Panc1 (cell line): ENCODE measurements at regions of chr6 and their contacts with region 1.

Region 1: DNA sequence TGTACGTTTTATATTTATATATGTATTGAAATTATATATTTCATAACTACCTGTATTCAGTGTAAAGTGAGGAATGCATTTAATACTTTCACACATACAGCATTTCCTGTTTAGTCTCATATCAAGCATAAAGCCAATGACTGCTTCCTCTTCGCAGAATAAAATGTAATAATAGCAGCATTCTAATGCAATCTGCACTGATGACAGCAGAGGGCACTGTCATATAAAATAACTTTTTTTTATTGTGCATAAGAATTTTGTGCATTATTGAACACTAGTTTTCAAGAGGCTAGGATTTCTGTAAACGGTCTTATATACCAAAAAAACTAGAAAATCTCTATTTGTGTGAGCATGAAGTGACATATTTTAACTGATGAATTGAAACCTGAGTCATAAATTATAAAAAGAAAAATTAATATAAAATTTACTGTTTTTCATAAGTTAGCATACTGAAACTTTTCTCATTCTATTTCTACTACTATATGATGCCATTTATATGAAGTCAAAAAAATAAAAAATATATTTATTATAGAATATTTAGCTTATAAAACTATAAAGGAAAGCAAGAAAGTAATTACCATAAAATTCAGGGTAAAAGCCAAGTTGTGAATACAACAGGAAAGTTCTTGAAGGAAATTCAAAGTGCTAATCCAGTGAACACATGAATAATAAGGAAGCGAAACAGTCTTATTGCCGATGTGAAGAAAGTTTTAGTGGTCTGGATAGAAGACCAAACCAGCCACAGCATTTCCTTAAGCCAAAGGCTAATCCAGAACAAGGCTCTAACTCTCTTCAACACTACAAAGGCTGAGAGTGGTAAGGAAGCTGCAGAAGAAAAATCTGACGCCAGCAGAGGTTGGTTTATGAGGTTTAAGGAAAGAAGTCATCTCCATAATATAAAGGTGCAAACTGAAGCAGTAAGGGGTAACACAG is 36.3 kb downstream of the RNF146 start:
- DNase-seq: peak; percentile 33
- ATAC-seq: no peak
- H3K4me3 ChIP-seq: no peak overlapping the region
- H3K27ac ChIP-seq: no peak overlapping the region
- H3K4me1 ChIP-seq: no peaks in the 10 kb centered on the region; the same call in 1 of the 2 replicates
- H3K27me3 ChIP-seq: no peaks in the 10 kb centered on the region
- CTCF ChIP-seq: peak; percentile 76; the same call in 1 of the 2 replicates

Region 2: GRCh38 chr6:127420556-127420955 is 117.6 kb after region 1 on chr6:
- CTCF ChIA-PET with region 1: interaction called, 4 read pairs
- POLR2A ChIA-PET with region 1: no interaction called
- in situ Hi-C with region 1: no loop called
- intact Hi-C with region 1: loop called (anchors 2 kb)
- DNase-seq: peak; percentile 96
- ATAC-seq: peak; percentile 99
- H3K4me3 ChIP-seq: 0 out of 4 replicates have a peak overlapping the region, but pooled peaks of 1 of the 2 experiments have one; percentile 0
- H3K27ac ChIP-seq: peak overlapping the region; percentile 89
- H3K4me1 ChIP-seq: peaks cover 13% of the 10 kb centered on the region
- H3K27me3 ChIP-seq: no peaks in the 10 kb centered on the region
- CTCF ChIP-seq: peak; percentile 72

Region 3: GRCh38 chr6:127436578-127437110 is 133.7 kb after region 1 on chr6:
- CTCF ChIA-PET with region 1: no interaction called
- POLR2A ChIA-PET with region 1: no interaction called
- in situ Hi-C with region 1: no loop called
- intact Hi-C with region 1: no loop called
- DNase-seq: no peak
- ATAC-seq: no peak
- H3K4me3 ChIP-seq: no peak overlapping the region
- H3K27ac ChIP-seq: no peak overlapping the region
- H3K4me1 ChIP-seq: no peaks in the 10 kb centered on the region
- H3K27me3 ChIP-seq: no peaks in the 10 kb centered on the region
- CTCF ChIP-seq: no peak

Region 4: DNA sequence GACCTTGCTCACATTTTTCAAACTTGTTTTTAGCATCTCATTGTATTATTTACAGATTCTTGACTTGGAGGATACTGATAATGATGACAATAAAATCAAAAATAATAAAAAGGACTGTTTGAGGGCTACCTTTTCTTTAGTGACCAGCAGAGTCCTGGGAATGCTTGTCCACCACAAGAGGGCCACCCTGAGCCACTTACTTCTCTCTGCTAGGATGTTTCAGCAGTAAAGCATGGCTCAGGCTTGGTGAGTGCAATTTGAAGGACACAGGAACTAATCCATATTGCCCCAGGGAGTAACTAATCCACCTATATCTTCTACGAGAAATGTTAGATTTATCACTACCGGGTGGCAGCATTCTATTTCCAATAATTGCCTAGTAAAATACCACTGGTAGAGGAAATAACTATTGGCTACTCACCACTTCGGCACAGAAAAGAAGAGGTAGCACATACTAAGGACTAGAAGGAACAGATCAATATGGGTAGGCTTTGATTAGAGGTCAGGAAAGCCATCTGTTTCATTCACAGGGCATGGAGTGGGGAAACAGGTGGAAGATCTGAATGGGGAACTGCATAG is 162.0 kb after region 1 on chr6:
- CTCF ChIA-PET with region 1: no interaction called
- POLR2A ChIA-PET with region 1: no interaction called
- in situ Hi-C with region 1: no loop called
- intact Hi-C with region 1: loop called (anchors 2 kb)
- DNase-seq: peak; percentile 52
- ATAC-seq: peak; percentile 96
- H3K4me3 ChIP-seq: no peak overlapping the region
- H3K27ac ChIP-seq: no peak overlapping the region
- H3K4me1 ChIP-seq: no peaks in the 10 kb centered on the region
- H3K27me3 ChIP-seq: no peaks in the 10 kb centered on the region
- CTCF ChIP-seq: peak; percentile 92

Region 5: GRCh38 chr6:127484212-127484858 is 181.3 kb after region 1 on chr6:
- CTCF ChIA-PET with region 1: no interaction called
- POLR2A ChIA-PET with region 1: no interaction called
- in situ Hi-C with region 1: no loop called
- intact Hi-C with region 1: no loop called
- DNase-seq: peak; percentile 24
- ATAC-seq: no peak
- H3K4me3 ChIP-seq: no peak overlapping the region
- H3K27ac ChIP-seq: no peak overlapping the region
- H3K4me1 ChIP-seq: peaks cover 10% of the 10 kb centered on the region; the same call in 1 of the 2 replicates
- H3K27me3 ChIP-seq: no peaks in the 10 kb centered on the region
- CTCF ChIP-seq: no peak

Region 6: DNA sequence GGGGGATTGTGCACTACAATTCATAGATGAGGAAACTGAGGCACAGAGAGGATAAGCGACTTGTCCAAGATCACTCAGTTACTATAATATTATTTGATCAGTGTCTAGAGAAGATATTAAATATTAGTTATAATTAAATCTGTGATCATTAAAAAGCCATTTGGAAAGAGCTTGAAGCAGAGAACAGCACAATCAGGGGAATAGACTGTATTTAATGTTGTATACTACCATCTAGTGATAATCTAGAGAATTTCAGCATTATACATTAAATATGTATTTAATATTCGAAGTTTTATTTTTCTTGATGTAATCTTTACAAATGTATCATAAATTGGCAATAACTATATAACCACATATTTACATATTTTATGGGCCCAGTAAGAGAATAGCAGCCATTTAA is 236.3 kb after region 1 on chr6:
- CTCF ChIA-PET with region 1: interaction called, 14 read pairs
- POLR2A ChIA-PET with region 1: no interaction called
- in situ Hi-C with region 1: no loop called
- intact Hi-C with region 1: loop called (anchors 2 kb)
- DNase-seq: no peak
- ATAC-seq: 0 out of 2 replicates have a peak, but pooled peaks have one; percentile 66
- H3K4me3 ChIP-seq: no peak overlapping the region
- H3K27ac ChIP-seq: no peak overlapping the region
- H3K4me1 ChIP-seq: no peaks in the 10 kb centered on the region
- H3K27me3 ChIP-seq: 0 out of 2 replicates have a peak, but pooled peaks cover 3% of the 10 kb centered on the region
- CTCF ChIP-seq: peak; percentile 47; the same call in 1 of the 2 replicates